Head of caudate nucleus (tissue), 42 donors: ENCODE measurements at regions of chr1 and their contacts with region 1.

Region 1: DNA sequence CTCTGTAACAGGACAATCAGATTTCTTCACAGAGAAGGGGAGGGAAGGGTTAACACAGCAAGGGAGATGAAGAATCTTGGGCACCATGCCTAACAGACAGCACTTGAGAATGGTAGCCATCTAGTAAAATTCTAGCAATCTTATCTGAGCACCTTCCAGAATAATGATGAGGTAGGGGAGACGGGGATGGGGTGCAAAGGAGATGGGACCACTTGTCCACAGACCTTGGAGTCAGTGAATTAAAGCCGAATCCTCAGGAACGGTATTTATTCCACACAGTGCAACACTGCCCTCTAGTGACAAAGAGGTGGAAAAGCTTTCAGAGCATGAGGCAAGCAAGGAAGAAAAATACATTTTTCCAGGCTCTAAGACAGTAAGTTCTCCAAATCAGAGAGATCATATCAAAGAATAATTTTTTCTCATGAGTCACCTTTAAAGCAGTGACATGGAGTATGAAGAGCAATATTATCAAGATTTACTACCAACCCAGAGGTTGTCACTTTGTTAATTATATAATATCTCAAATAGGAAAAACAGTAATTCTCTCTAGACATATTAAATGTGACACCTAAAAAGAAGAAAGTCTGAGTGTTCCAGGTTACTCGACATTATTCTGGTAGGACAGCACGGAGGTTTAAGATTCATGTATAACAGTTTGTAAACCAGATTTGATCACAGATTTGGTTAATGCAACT is 43.3 kb upstream of the LPAR3 start:
- DNase-seq: peak in 27 of 42 donors; percentile 16 to 79 (median 57)

Region 2: GRCh38 chr1:84763912-84764663 is 172.2 kb before region 1 on chr1:
- intact Hi-C with region 1: loop called (anchors 10 kb)
- DNase-seq: no peak